ENCODE measurements at regions of chr10 and their contacts with region 1.

Region 1: GRCh38 chr10:132458593-132459300 is 61.7 kb downstream of the PWWP2B start:
- DNase-seq: peak; percentile 62 to 69
- H3K4me3 ChIP-seq: no peak overlapping the region
- H3K27ac ChIP-seq: no peak overlapping the region
- H3K4me1 ChIP-seq: peaks cover 0 to 13% of the 10 kb centered on the region in 2 donors
- H3K27me3 ChIP-seq: no peaks in the 10 kb centered on the region
- CTCF ChIP-seq: peak; percentile 97 to 99 (median 98)
- POLR2A ChIP-seq: no peak

Region 2: DNA sequence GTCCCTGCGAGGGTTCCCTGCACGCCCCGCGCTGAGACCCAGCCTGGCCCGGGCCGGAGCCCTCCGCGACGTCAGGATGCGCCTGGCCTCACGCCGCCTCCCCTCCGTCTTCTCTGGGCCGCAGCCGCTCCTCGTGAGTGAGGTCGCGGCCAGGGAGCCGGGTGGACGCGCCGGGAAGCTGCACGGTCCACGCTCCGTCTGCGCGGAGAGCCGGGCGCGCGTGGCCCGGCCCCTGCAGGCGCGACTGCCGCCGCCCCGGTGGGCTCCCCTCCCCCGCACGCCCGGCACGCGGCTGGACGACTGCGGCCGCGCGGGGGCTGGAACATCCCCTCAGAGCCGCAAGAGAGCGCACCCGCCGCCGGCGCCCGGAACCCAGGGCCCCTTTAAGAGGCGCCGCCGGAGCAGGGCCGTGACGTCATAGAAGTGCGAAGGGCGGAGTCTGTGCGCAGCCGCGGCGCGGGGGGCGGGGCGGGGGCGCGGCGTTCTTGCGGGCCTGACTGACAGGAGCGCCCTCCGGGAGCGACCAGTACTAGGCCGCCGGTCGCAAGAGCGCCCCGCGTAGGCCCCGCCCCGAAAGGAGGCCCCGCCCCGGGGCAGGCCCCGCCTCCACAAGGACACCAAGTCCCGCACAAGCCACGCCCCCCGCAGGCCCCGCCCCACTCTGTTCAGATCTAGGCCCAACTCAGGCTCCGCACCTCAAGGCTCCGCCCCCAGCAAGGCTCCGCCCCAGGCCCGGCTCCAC is 78.4 kb after region 1 on chr10:
- intact Hi-C with region 1: loop called (anchors 2 kb)
- DNase-seq: peak; percentile 100
- H3K4me3 ChIP-seq: peak overlapping the region; percentile 63 to 80
- H3K27ac ChIP-seq: peak overlapping the region; percentile 95 to 99
- H3K4me1 ChIP-seq: peaks cover 7 to 13% of the 10 kb centered on the region in 2 donors
- H3K27me3 ChIP-seq: no peaks in the 10 kb centered on the region
- CTCF ChIP-seq: peak; percentile 5 to 77 (median 59)
- POLR2A ChIP-seq: peak; percentile 89 to 92

Region 3: DNA sequence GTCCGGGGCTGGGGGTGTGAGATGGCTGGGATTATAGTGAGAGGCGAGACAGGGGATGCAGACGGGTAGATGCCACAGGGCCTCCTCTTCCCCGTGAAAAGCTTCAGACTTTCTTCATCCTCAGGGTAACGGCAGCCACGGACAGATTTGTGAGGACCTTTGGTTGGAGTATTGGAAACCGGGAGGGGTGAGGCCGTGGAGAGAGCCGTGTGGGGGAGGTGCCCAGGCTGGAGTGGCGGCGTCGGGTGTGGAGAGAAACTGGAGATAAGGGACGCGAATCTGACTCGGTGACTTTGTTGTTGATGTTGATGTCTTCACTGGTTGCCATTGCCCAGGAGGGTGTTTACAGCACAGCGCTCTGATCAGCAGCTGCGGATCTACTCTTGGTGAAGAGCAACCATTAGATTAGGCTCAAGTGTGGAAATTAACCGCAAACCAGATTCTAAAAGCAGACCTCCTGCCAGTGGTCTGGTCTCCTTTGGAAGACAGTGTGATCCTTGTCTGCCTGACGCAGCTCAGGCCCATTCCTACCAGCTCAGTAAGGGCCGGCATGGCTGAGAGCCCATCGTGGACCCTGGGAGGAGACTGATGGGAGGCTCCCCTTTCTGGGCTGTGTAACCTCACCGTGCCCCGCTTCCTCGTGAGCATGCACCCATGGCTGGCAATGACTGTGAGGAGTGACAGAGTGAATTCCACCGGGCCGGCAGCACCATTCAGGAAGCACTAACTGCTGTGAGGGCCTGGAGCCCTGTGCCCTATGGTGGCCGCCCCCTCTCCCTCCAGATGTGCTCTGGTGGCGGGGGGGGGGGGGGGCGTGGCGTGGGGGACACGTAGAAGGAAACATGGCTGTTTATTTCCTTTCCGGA is 169.2 kb after region 1 on chr10:
- intact Hi-C with region 1: no loop called
- DNase-seq: peak; percentile 67
- H3K4me3 ChIP-seq: no peak overlapping the region
- H3K27ac ChIP-seq: peak overlapping the region; percentile 96 to 97
- H3K4me1 ChIP-seq: peaks cover 6 to 39% of the 10 kb centered on the region in 2 donors
- H3K27me3 ChIP-seq: no peaks in the 10 kb centered on the region
- CTCF ChIP-seq: no peak
- POLR2A ChIP-seq: no peak

Region 4: GRCh38 chr10:132700156-132701098 is 241.7 kb after region 1 on chr10:
- intact Hi-C with region 1: no loop called
- DNase-seq: peak in 1 of 2 donors; percentile 42
- H3K4me3 ChIP-seq: peak overlapping the region in 1 of 2 donors; percentile 8
- H3K27ac ChIP-seq: peak overlapping the region; percentile 71
- H3K4me1 ChIP-seq: peaks cover 0 to 4% of the 10 kb centered on the region in 2 donors
- H3K27me3 ChIP-seq: no peaks in the 10 kb centered on the region
- CTCF ChIP-seq: no peak
- POLR2A ChIP-seq: no peak